ENCODE measurements at regions of chr2 and their contacts with region 1.

Region 1: DNA sequence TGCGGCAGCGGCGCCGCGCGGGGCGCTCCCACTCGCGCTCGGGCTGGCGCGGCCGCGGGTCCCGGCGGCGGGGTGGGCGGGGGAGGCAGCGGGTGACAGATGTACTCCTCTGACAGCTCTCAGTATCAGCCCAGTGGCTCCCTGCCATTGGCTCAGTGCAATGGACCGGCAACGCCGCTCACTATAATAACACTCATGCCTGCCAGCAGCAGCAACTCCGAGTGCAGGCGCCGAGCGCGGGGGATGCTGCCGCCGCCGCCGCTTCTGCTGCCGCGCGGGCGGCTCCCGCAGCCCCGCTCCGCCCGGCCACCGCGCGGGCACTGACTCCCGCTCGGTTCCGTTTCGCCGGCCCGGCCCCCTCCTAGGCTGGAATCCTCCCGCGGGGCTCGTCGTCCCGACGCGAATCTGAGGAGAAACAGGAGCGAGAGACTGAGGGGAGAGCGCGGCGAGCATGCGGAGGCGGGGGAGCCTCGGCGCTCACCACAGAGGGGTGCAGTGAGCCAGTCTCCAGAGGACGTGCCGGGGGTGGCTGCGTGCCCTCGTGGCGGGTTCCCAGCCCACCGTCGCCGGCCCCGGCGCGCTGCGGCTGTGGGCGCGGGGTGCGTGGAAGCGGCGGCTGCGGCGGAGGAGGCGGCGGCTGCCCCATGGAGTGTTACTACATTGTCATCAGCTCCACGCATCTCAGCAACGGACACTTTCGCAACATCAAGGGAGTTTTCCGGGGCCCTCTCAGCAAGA is at the start of gene ZNF804A:
- DNase-seq: no peak
- H3K4me3 ChIP-seq: peak within 1 kb of the TSS; percentile 69
- H3K27ac ChIP-seq: peak within 1 kb of the TSS; percentile 86
- H3K27me3 ChIP-seq: no peaks in the 10 kb centered on the region
- CTCF ChIP-seq: no peak
- polyA plus RNA-seq, gene ZNF804A: 3.5 and 6.2 TPM in 2 replicates

Region 2: DNA sequence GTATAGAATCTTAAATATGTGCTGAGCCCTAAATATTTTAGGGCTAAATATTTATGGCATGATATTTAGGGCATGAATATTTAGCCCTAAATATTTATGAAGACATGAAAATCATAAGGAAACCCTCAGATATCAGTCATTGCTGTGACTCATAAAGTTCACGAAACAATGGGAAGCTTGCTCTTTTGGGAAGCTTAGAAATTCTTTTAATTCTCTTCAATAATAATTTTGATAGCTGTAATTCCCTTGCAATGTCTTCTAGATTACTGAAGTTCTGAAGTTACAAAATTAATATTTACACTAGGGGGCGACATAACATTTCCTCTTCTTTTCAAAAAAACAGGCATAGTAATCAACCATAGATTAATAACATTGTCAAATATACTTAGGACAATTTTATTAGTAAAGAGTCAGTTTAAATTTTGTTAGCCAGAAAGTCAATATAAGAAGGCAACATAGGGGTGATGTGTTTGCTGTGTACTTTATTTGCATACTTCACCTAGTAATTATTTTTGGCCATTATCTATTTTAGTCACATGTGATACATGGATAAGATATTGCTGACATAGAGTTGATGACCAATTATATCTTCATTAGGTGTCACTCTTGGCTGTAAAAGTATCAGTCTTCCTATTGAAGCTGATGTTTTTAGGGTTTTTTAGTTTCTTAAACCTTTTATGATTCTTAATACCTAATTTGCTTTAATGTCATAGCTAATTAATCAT is 13.0 kb after region 1 on chr2:
- CTCF ChIA-PET with region 1: interaction called, 12 read pairs
- POLR2A ChIA-PET with region 1: interaction called, 4 read pairs
- DNase-seq: no peak
- H3K4me3 ChIP-seq: no peak overlapping the region
- H3K27ac ChIP-seq: no peak overlapping the region
- H3K27me3 ChIP-seq: no peaks in the 10 kb centered on the region
- CTCF ChIP-seq: peak; percentile 57

Region 3: GRCh38 chr2:185082749-185083148 is 484.3 kb after region 1 on chr2:
- CTCF ChIA-PET with region 1: no interaction called
- POLR2A ChIA-PET with region 1: no interaction called
- DNase-seq: no peak
- H3K4me3 ChIP-seq: no peak overlapping the region
- H3K27ac ChIP-seq: no peak overlapping the region
- H3K27me3 ChIP-seq: no peaks in the 10 kb centered on the region
- CTCF ChIP-seq: no peak

Region 4: GRCh38 chr2:185268651-185269050 is 670.2 kb after region 1 on chr2:
- CTCF ChIA-PET with region 1: interaction called, 10 read pairs
- POLR2A ChIA-PET with region 1: no interaction called
- DNase-seq: no peak
- H3K4me3 ChIP-seq: no peak overlapping the region
- H3K27ac ChIP-seq: no peak overlapping the region
- H3K27me3 ChIP-seq: no peaks in the 10 kb centered on the region
- CTCF ChIP-seq: no peak